ENCODE measurements at regions of chr5 and their contacts with region 1.

Region 1: GRCh38 chr5:152560512-152561137 is 155.5 kb upstream of the NMUR2 start:
- DNase-seq: peak; percentile 24
- H3K4me3 ChIP-seq: no peak overlapping the region
- H3K27ac ChIP-seq: no peak overlapping the region
- H3K4me1 ChIP-seq: no peaks in the 10 kb centered on the region
- H3K27me3 ChIP-seq: no peaks in the 10 kb centered on the region
- CTCF ChIP-seq: peak; percentile 57 to 63
- POLR2A ChIP-seq: no peak

Region 2: GRCh38 chr5:152593407-152593932 is 32.8 kb after region 1 on chr5:
- CTCF ChIA-PET with region 1: no interaction called
- POLR2A ChIA-PET with region 1: no interaction called
- dilution Hi-C with region 1: no loop called
- intact Hi-C with region 1: no loop called
- DNase-seq: no peak
- H3K4me3 ChIP-seq: no peak overlapping the region
- H3K27ac ChIP-seq: no peak overlapping the region
- H3K4me1 ChIP-seq: no peaks in the 10 kb centered on the region
- H3K27me3 ChIP-seq: no peaks in the 10 kb centered on the region
- CTCF ChIP-seq: no peak
- POLR2A ChIP-seq: no peak

Region 3: GRCh38 chr5:153711755-153712154 is 1151.1 kb after region 1 on chr5:
- CTCF ChIA-PET with region 1: interaction called, 3 read pairs
- POLR2A ChIA-PET with region 1: no interaction called
- dilution Hi-C with region 1: no loop called
- intact Hi-C with region 1: loop called (anchors 1 kb)
- DNase-seq: peak; percentile 7
- H3K4me3 ChIP-seq: no peak overlapping the region
- H3K27ac ChIP-seq: no peak overlapping the region
- H3K4me1 ChIP-seq: no peaks in the 10 kb centered on the region
- H3K27me3 ChIP-seq: no peaks in the 10 kb centered on the region
- CTCF ChIP-seq: peak in 1 of 2 donors; percentile 15
- POLR2A ChIP-seq: no peak